ENCODE measurements at regions of chr7 and their contacts with region 1.

Region 1: GRCh38 chr7:133081599-133082389 is at the start of gene CHCHD3:
- DNase-seq: peak; percentile 91 to 98 (median 94)
- ATAC-seq: peak; percentile 99
- H3K4me3 ChIP-seq: peak within 1 kb of the TSS; percentile 79
- H3K4me3 Mint-ChIP-seq: peak within 1 kb of the TSS; percentile 90
- H3K27ac ChIP-seq: peak within 1 kb of the TSS; percentile 86 to 92
- H3K27ac Mint-ChIP-seq: peak within 1 kb of the TSS; percentile 92
- H3K4me1 ChIP-seq: peaks cover 15% of the 10 kb centered on the region
- H3K4me1 Mint-ChIP-seq: peaks cover 33% of the 10 kb centered on the region
- H3K27me3 ChIP-seq: no peaks in the 10 kb centered on the region
- H3K27me3 Mint-ChIP-seq: no peaks in the 10 kb centered on the region
- CTCF ChIP-seq: no peak
- total RNA-seq, gene CHCHD3: 21.6 to 21.7 TPM

Region 2: DNA sequence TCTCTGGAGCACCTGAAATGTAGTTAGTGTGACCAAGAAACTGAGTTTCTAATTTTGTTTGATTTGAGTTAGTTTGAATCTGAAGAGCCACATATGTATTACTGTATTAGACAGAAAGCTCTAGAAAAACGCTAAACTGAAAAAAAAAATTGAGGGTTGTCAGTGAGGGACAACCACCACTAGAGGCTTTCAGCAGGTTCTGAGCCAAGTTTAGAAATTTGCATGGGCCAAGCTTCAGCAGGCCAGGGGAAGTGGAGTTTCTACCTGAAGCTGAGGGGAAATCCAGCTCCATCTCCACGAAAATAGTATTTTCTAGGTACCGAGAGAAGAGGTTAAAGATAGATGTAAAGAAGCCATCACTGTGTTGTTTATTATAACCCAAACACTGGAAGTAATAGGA is 427.6 kb before region 1 on chr7:
- CTCF ChIA-PET with region 1: no interaction called
- POLR2A ChIA-PET with region 1: interaction called, 3 read pairs
- intact Hi-C with region 1: loop called in 1 of 2 experiments (anchors 10 kb)
- DNase-seq: peak in 3 of 14 experiments; percentile 27 to 35 (median 34)
- ATAC-seq: peak; percentile 33
- H3K4me3 ChIP-seq: no peak overlapping the region
- H3K4me3 Mint-ChIP-seq: peak overlapping the region; percentile 82
- H3K27ac ChIP-seq: no peak overlapping the region
- H3K27ac Mint-ChIP-seq: peak overlapping the region; percentile 16
- H3K4me1 ChIP-seq: peaks cover 21% of the 10 kb centered on the region
- H3K4me1 Mint-ChIP-seq: peaks cover 43% of the 10 kb centered on the region
- H3K27me3 ChIP-seq: no peaks in the 10 kb centered on the region
- H3K27me3 Mint-ChIP-seq: no peaks in the 10 kb centered on the region
- CTCF ChIP-seq: peak; percentile 9

Region 3: DNA sequence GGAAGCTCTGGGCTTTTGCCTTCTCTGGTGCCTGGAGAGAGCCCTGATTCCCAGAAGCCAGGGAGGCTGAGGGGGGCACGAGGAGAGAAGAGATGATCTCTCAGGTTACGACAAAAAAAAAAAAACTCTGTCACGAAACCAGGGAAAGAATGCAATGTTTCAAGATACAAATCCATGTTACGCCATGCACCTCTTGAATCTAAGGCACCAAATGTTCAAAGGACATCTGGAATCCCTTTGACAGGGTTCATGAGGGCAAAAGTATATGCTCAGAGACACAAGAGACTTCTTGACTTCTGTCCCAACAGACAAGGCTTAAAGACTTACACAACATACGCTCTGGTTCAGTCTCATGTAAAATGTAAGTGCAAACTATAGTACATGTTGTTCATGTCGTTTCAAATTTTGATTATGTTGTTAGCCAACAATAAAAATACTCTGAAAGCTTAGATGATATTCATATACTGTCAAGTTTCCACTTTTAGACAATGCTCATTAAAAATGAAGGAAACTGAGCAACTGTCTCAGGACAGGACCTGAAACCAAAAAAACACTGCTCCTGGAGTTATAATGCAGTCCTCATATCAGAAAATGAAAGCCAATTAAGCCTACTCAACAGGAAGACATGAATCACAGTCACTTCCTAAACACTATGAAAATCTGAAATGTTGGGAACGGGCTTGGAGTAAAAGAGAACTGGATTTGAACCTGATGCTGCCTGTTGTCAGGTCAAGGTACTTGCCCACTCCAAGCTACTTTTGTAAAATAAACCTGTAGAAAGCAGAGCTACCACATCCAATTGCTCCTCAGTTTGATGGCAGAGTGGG is 72.2 kb before region 1 on chr7:
- CTCF ChIA-PET with region 1: no interaction called
- POLR2A ChIA-PET with region 1: no interaction called
- intact Hi-C with region 1: no loop called
- DNase-seq: no peak
- ATAC-seq: no peak
- H3K4me3 ChIP-seq: no peak overlapping the region
- H3K4me3 Mint-ChIP-seq: no peak overlapping the region
- H3K27ac ChIP-seq: no peak overlapping the region
- H3K27ac Mint-ChIP-seq: no peak overlapping the region
- H3K4me1 ChIP-seq: no peaks in the 10 kb centered on the region
- H3K4me1 Mint-ChIP-seq: peaks cover 9% of the 10 kb centered on the region
- H3K27me3 ChIP-seq: no peaks in the 10 kb centered on the region
- H3K27me3 Mint-ChIP-seq: no peaks in the 10 kb centered on the region
- CTCF ChIP-seq: no peak

Region 4: DNA sequence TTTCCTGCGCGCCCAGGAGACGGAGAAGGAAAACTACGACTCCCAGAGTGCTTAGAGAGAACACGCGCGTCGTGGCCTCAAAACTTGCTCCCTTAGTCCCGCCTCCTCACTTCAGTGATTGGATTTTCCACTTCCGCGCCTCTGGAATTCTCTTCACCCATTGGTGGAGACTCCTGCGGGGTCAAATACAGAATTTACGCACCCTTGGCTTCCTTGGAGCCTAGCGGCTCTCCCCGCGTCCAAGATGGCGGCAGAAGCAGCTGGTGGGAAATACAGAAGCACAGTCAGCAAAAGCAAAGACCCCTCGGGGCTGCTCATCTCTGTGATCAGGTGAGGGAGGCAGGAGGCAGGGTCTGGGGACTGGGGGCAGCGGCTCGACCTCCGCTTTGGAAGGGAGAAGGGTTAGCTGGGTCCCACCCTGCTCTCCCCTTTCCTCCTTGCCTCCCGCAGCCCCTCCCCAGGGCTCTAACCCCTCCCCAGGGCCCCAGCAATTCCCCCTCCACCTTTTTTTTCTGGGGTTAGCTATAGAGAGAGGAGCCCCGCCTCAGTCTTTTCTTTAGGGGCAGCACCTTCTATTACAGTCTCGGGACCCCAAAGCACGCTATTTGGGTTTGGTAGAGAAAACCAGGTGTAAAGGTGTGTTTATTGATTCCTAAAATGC is 171.2 kb after region 1 on chr7 and contains the start of gene EXOC4:
- CTCF ChIA-PET with region 1: interaction called, 3 read pairs
- POLR2A ChIA-PET with region 1: interaction called, 13 read pairs
- intact Hi-C with region 1: loop called (anchors 2 kb)
- DNase-seq: peak; percentile 80 to 99 (median 87)
- ATAC-seq: peak; percentile 99
- H3K4me3 ChIP-seq: peak within 1 kb of the TSS; percentile 85
- H3K4me3 Mint-ChIP-seq: peak within 1 kb of the TSS; percentile 97
- H3K27ac ChIP-seq: peak within 1 kb of the TSS; percentile 36 to 77
- H3K27ac Mint-ChIP-seq: peak within 1 kb of the TSS; percentile 94
- H3K4me1 ChIP-seq: peaks cover 8% of the 10 kb centered on the region
- H3K4me1 Mint-ChIP-seq: peaks cover 50% of the 10 kb centered on the region
- H3K27me3 ChIP-seq: no peaks in the 10 kb centered on the region
- H3K27me3 Mint-ChIP-seq: no peaks in the 10 kb centered on the region
- CTCF ChIP-seq: no peak
- total RNA-seq, gene EXOC4: 58.0 to 59.9 TPM

Region 5: GRCh38 chr7:134126966-134127848 is 1045.4 kb after region 1 on chr7 and contains the start of gene LRGUK:
- CTCF ChIA-PET with region 1: no interaction called
- POLR2A ChIA-PET with region 1: interaction called, 4 read pairs
- intact Hi-C with region 1: loop called in 1 of 2 experiments (anchors 2 kb)
- DNase-seq: peak; percentile 55 to 90 (median 72)
- ATAC-seq: peak; percentile 100
- H3K4me3 ChIP-seq: peak within 1 kb of the TSS; percentile 72
- H3K4me3 Mint-ChIP-seq: peak within 1 kb of the TSS; percentile 91
- H3K27ac ChIP-seq: no peak within 1 kb of the TSS
- H3K27ac Mint-ChIP-seq: no peak within 1 kb of the TSS
- H3K4me1 ChIP-seq: peaks cover 12% of the 10 kb centered on the region
- H3K4me1 Mint-ChIP-seq: peaks cover 21% of the 10 kb centered on the region
- H3K27me3 ChIP-seq: no peaks in the 10 kb centered on the region
- H3K27me3 Mint-ChIP-seq: peaks cover 35% of the 10 kb centered on the region
- CTCF ChIP-seq: no peak
- total RNA-seq, gene LRGUK: 0.20 to 0.27 TPM

Region 6: DNA sequence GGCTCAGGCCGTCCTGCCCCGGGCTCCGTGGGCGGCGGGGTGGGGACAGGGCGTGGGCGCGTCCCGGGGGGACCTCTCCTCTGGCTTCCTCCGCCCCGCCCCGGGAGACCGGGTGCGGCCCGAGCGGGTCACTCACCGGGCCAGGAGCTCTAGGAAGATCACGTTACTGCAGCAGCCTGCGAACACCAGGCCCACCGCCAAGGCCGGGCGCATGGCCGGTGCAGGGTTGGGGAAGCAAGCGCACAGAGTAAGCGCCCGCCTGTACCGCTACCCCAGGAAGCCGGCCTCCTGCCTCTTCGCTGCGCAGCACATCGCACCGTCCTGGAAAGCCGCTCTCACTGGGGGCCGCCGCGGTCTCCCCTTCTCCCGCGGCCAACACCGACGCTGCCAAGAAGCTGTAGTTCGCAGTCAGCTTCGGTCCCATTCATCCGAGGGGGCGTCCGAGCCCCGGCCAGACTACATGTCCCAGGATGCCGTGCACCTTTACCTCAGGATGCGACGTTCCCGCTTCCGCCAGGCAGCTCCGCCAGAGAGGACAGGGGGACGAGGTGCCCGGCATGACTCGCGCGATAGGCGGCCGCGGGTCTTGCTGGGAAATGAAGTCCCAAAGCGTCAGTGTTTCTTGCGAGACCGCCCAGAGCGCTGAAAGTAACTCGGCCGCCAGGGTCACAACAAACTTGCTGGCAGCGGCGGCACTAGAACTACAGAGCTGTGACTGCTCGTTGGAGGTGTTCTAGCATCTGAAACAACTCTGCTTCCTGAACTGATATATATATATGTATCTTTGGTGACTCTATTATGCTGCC is 1234.9 kb after region 1 on chr7 and contains the start of gene SLC35B4:
- CTCF ChIA-PET with region 1: no interaction called
- POLR2A ChIA-PET with region 1: interaction called, 8 read pairs
- intact Hi-C with region 1: loop called (anchors 2 to 10 kb)
- DNase-seq: peak; percentile 90 to 97 (median 92)
- ATAC-seq: peak; percentile 96
- H3K4me3 ChIP-seq: peak within 1 kb of the TSS; percentile 98
- H3K4me3 Mint-ChIP-seq: peak within 1 kb of the TSS; percentile 93
- H3K27ac ChIP-seq: peak within 1 kb of the TSS; percentile 36 to 65
- H3K27ac Mint-ChIP-seq: peak within 1 kb of the TSS; percentile 77
- H3K4me1 ChIP-seq: peaks cover 15% of the 10 kb centered on the region
- H3K4me1 Mint-ChIP-seq: peaks cover 26% of the 10 kb centered on the region
- H3K27me3 ChIP-seq: no peaks in the 10 kb centered on the region
- H3K27me3 Mint-ChIP-seq: no peaks in the 10 kb centered on the region
- CTCF ChIP-seq: peak; percentile 27
- total RNA-seq, gene SLC35B4: 5.8 to 7.8 TPM

Measured in CD4-positive, alpha-beta T cell (primary cell).